ENCODE measurements at regions of chr5 and their contacts with region 1.

Region 1: DNA sequence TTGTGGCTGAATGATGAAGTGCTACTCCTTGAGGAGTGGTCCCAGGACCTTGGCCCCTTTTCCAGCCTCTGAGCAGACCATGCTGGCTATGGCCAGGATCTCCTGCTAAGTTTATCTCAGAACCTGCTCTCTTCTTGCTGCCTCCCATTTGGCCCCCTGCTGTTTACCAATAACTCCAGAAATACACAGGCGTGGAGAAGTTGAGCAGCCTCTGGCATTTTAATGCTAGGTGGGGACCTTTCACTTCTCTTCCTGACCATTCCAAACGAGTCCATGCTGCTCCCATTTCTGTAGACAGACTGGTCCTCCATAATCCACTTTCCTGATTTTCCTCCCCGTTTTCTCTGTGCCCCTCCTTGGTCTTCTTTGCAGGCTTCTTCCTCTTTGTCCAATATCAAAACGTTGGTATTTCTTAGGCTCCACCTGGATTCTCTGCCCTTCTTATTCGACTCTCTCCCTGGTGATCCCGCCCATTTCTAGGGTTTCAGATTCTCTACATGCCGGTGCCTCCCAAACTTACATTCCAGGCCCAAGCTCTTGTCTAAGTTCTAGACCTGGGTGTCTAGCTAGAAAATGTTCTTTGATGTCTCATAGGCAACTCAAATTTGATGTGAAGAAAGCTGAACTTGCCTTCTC is 33.4 kb upstream of the TNFAIP8 start:
- DNase-seq: no peak

Region 2: DNA sequence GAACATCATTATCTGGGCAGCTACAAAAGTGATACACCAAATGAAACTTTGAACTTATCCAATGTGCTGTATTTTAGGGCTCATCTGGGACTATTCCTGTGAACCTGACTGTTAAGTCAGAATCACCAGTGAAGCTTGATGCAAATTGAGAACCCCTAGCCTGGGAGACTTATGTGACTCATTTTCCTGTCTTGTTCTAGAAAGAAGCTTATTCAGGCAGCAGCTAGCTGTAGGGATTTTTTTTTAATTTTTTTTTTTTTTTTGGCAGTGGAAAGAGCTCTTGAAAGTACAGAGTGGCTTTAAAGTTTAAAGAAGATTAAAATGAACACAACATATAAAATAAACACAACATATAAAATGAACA is 47.7 kb before region 1 on chr5:
- CTCF ChIA-PET with region 1: no interaction called
- POLR2A ChIA-PET with region 1: no interaction called
- DNase-seq: no peak

Region 3: DNA sequence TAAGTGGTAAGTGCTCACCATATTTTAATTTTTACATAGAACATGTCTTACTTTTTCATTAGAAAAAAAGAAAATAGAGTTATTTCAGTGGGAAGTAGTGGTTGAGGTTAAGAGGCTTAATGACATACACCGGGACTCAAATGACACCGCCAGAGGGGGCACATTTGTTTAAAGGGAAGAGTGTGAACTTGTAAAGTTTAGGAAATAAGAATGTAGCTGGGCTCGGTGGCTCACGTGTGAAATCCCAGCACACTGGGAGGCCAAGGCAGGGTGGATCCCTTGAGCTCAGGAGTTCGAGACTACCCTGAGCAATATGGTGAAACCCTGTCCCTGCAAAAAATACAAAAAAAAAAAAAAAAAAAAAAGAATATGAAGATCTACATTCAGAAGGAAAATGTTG is 10.0 kb before region 1 on chr5:
- CTCF ChIA-PET with region 1: interaction called, 11 read pairs
- POLR2A ChIA-PET with region 1: interaction called, 4 read pairs
- DNase-seq: no peak